Activated T-helper 1 cell treated with anti-CD3 and anti-CD28 coated beads, Interleukin-12 subunit alpha, Interleukin-12 subunit beta, Interleukin-2, Interleukin-4 antibody, amounts not matched to agents 30 ng/mL and 10 ng/mL and 1 ng/mL, durations not matched to agents 14 hours and 24 hours and 36 hours (primary cell): ENCODE measurements at regions of chrX and their contacts with region 1.

Region 1: DNA sequence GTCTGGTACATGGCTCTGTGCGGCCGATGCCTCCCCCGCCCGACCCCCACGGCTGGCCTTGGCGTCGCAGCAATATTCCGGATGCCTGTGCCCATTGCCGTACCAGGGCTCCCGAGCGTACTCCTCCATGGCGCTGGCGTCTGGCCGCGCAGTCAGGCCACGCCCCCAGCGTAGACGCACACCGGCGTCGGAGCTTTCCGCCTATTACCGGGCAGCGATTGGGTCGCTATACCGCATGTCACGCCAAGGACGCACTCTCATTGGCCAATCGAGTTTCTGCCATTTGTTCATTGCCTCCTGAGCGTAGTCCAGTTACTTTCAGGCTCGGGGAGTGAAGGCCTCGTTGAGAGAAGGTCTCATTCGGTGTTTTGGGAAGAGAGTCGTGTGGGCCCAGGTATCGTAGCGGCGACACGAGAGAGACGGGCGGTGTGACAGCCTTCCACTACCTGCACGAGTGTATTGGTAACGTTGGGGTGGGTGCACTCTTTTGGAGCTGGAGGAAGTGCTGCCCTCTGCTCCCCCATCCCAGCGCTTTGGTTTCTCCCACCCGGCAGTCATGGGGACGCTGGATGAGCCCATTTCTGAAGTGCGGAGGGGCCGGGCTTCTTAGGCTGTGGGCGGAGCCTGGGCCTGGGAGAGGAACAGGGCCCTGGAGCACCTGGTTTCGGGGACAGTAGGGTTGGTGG is at the starts of genes PQBP1 and TIMM17B:
- DNase-seq: peak; percentile 84
- H3K4me3 Mint-ChIP-seq: peak within 1 kb of the TSS; percentile 97
- H3K27ac Mint-ChIP-seq: peak within 1 kb of the TSS; percentile 100
- H3K4me1 Mint-ChIP-seq: peaks cover 8% of the 10 kb centered on the region
- H3K27me3 Mint-ChIP-seq: no peaks in the 10 kb centered on the region
- total RNA-seq, gene PQBP1: 112 and 119 TPM in 2 replicates
- total RNA-seq, gene TIMM17B: 72.2 and 72.3 TPM in 2 replicates

Region 2: GRCh38 chrX:48648336-48648751 is 249.4 kb before region 1 on chrX:
- intact Hi-C with region 1: loop called (anchors 2 kb)
- DNase-seq: no peak
- H3K4me3 Mint-ChIP-seq: no peak overlapping the region
- H3K27ac Mint-ChIP-seq: no peak overlapping the region
- H3K4me1 Mint-ChIP-seq: peaks cover 5% of the 10 kb centered on the region
- H3K27me3 Mint-ChIP-seq: no peaks in the 10 kb centered on the region

Region 3: DNA sequence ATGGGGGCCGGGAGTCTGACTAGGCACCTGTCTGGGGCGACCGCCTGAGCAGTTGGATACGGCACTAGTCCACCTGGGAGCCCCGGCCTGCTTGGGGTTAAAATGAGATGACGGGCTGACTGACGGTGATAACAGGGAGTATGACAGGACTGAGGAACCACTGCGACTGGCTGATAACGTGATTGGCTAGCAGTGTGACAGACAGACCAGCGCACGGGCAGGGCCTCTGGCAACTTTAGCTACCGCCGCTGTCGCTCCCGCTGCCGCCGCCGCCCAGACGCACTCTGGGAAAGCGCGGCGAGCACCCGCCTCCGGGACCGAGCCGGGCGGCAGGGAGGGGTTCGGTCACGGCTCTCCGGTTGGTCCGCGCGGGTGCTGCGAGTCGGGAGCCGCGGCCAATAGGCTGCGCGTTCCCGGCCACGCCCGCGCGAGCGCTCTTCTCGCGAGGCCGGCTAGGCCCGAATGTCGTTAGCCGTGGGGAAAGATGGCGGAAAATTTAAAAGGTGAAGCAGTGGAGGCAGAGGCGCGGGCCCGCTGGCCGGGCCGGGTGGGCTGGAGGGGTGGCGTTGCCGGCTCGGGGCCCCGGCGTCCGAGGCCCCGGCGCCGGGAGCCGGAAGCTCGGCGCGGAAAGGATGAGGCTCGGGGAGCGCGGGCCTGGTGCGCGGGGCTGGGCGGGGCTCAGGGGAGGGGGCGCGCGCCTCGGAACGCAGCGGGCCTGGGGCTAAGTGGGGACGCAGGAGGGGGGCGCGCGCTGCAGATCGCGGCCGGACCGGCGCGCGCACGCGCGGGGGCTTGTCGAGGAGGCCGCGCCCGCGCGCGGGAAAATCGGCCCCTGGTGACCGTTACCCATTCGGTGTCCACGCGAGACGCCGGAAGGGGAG is 201.2 kb before region 1 on chrX and contains the start of gene SUV39H1:
- intact Hi-C with region 1: loop called (anchors 1 kb)
- DNase-seq: peak; percentile 85
- H3K4me3 Mint-ChIP-seq: peak within 1 kb of the TSS; percentile 93
- H3K27ac Mint-ChIP-seq: peak within 1 kb of the TSS; percentile 91
- H3K4me1 Mint-ChIP-seq: peaks cover 35% of the 10 kb centered on the region
- H3K27me3 Mint-ChIP-seq: peaks cover 2% of the 10 kb centered on the region
- total RNA-seq, gene SUV39H1: 27.5 and 27.7 TPM in 2 replicates

Region 4: GRCh38 chrX:48835524-48836329 is 62.0 kb before region 1 on chrX and contains the start of gene PCSK1N:
- intact Hi-C with region 1: no loop called
- DNase-seq: no peak
- H3K4me3 Mint-ChIP-seq: peak within 1 kb of the TSS; percentile 76
- H3K27ac Mint-ChIP-seq: peak within 1 kb of the TSS; percentile 53
- H3K4me1 Mint-ChIP-seq: peaks cover 16% of the 10 kb centered on the region
- H3K27me3 Mint-ChIP-seq: peaks cover 39% of the 10 kb centered on the region
- total RNA-seq, gene PCSK1N: 0.36 and 0.42 TPM in 2 replicates

Region 5: DNA sequence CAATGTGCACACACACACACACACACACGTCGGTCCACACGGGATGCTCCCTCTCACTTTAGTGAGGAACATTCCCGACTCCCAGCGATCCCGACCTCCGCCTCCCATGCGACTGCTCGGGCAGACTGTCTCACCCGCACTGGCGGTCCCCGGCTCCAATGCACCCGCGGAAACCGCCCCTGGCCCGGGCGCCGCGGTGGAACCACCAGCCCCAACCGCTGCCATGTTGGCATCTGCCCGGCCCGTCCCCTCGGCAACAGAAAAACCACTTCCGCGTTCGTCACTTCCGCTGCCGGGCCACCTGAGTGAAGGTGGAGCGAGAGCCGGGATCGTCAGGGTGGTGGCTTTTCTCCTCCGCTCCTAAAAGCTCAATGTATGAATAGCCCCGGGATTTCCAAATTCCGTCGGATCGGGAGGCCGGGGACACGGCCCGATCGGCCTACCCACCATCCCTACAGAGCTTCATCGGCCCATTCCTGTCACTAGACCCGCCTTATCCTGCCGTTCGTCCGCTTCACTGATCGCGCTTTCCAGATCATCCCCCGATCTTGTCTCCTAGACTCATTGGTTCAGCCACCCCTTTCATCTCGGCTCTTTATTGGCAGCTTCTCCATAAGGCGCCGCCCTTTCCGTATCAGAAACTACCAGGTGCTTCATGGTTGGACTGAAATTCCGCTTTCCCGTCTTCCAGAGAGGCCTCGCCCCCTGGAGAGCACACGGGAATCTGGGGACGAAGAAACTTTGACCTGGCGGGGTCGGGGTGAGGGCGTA is 13.8 kb after region 1 on chrX and contains the start of gene SLC35A2:
- intact Hi-C with region 1: loop called (anchors 1 kb)
- DNase-seq: peak; percentile 85
- H3K4me3 Mint-ChIP-seq: peak within 1 kb of the TSS; percentile 98
- H3K27ac Mint-ChIP-seq: peak within 1 kb of the TSS; percentile 93
- H3K4me1 Mint-ChIP-seq: peaks cover 35% of the 10 kb centered on the region
- H3K27me3 Mint-ChIP-seq: no peaks in the 10 kb centered on the region
- total RNA-seq, gene SLC35A2: 24.9 and 26.5 TPM in 2 replicates

Region 6: GRCh38 chrX:49002091-49002935 is 104.5 kb after region 1 on chrX and contains the start of gene GRIPAP1:
- intact Hi-C with region 1: loop called (anchors 1 kb)
- DNase-seq: peak; percentile 68
- H3K4me3 Mint-ChIP-seq: peak within 1 kb of the TSS; percentile 99
- H3K27ac Mint-ChIP-seq: peak within 1 kb of the TSS; percentile 96
- H3K4me1 Mint-ChIP-seq: peaks cover 35% of the 10 kb centered on the region
- H3K27me3 Mint-ChIP-seq: no peaks in the 10 kb centered on the region
- total RNA-seq, gene GRIPAP1: 85.8 and 89.2 TPM in 2 replicates